HEK293 (cell line): ENCODE measurements at regions of chr17 and their contacts with region 1.

Region 1: GRCh38 chr17:77088455-77089123 is 52.2 kb upstream of the SEC14L1 start:
- H3K4me3 ChIP-seq: peak overlapping the region; percentile 81
- H3K27ac ChIP-seq: peak overlapping the region; percentile 81
- H3K4me1 ChIP-seq: peaks cover 2% of the 10 kb centered on the region
- CTCF ChIP-seq: peak; percentile 98

Region 2: DNA sequence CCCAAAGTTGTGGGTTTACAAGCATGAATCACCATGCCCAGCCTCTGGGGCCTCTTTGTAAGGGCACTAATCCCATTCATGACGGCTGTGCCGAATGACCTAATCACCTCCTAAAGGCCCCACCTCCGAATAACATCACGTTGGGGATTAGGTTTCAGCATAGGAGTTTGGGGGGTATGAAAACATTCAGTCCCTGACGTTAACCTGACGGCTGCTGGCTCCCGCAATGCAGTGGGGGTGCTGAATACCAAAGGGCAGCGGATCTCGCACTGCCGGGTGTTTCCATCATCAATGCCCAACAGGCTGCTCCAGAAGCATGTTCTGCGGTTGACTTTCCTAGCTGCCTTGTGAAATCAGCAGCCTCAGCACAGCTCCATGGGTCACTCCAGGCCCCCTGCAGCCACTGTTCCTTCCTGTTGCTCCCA is 68.6 kb before region 1 on chr17:
- CTCF ChIA-PET with region 1: no interaction called
- POLR2A ChIA-PET with region 1: no interaction called
- H3K4me3 ChIP-seq: no peak overlapping the region
- H3K27ac ChIP-seq: no peak overlapping the region
- H3K4me1 ChIP-seq: no peaks in the 10 kb centered on the region
- CTCF ChIP-seq: no peak

Region 3: GRCh38 chr17:77036807-77037381 is 51.7 kb before region 1 on chr17:
- CTCF ChIA-PET with region 1: no interaction called
- POLR2A ChIA-PET with region 1: no interaction called
- H3K4me3 ChIP-seq: no peak overlapping the region
- H3K27ac ChIP-seq: no peak overlapping the region
- H3K4me1 ChIP-seq: no peaks in the 10 kb centered on the region
- CTCF ChIP-seq: no peak

Region 4: DNA sequence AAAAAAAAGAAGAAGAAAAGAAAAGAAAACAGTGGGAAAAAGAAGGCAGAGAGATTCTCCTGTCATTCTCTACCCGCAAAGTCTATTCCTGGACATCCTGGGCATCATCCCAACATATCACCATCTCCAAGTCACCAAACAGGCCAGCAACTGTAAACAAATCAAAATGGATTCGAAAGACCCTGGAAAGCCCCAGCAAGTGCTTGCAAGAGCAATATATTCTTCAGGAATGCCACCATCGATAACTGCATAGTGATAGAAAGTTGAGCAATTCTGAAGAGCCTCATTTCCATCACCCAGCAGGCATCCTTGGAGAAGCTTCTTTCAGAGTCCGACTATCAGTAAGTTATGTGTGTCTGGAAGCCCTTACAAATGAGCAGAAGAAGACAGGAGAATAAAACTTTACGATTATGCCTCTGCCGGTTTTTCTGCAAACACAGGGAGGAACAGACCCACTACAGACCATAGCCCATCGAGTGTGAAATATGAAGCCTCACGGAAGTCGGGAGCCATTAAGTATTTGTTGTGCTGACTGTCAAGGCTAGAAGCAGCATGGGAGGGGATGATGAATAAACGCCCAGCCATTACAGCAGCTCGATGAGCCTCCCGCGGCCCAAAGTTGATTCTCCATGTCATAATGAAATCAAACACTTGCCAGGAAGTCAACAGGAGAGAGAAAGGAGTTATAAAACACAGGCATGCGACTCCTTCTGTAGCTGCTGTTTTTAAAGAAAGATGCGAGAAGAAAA is 12.3 kb before region 1 on chr17:
- CTCF ChIA-PET with region 1: interaction called, 18 read pairs
- POLR2A ChIA-PET with region 1: interaction called, 10 read pairs
- H3K4me3 ChIP-seq: no peak overlapping the region
- H3K27ac ChIP-seq: no peak overlapping the region; the same call in 1 of the 2 replicates
- H3K4me1 ChIP-seq: peaks cover 4% of the 10 kb centered on the region; the same call in 1 of the 2 replicates
- CTCF ChIP-seq: no peak

Region 5: GRCh38 chr17:77127735-77128361 is 39.3 kb after region 1 on chr17:
- CTCF ChIA-PET with region 1: interaction called, 11 read pairs
- POLR2A ChIA-PET with region 1: interaction called, 13 read pairs
- H3K4me3 ChIP-seq: no peak overlapping the region
- H3K27ac ChIP-seq: no peak overlapping the region
- H3K4me1 ChIP-seq: no peaks in the 10 kb centered on the region; the same call in 1 of the 2 replicates
- CTCF ChIP-seq: no peak

Region 6: GRCh38 chr17:77182205-77183172 is 93.9 kb after region 1 on chr17:
- CTCF ChIA-PET with region 1: interaction called, 11 read pairs
- POLR2A ChIA-PET with region 1: no interaction called
- H3K4me3 ChIP-seq: no peak overlapping the region
- H3K27ac ChIP-seq: no peak overlapping the region
- H3K4me1 ChIP-seq: peaks cover 13% of the 10 kb centered on the region
- CTCF ChIP-seq: no peak

Region 7: GRCh38 chr17:77196251-77196650 is 107.7 kb after region 1 on chr17:
- CTCF ChIA-PET with region 1: no interaction called
- POLR2A ChIA-PET with region 1: no interaction called
- H3K4me3 ChIP-seq: no peak overlapping the region
- H3K27ac ChIP-seq: no peak overlapping the region
- H3K4me1 ChIP-seq: no peaks in the 10 kb centered on the region
- CTCF ChIP-seq: no peak

Region 8: GRCh38 chr17:77254951-77255825 is 166.6 kb after region 1 on chr17:
- CTCF ChIA-PET with region 1: interaction called, 7 read pairs
- POLR2A ChIA-PET with region 1: interaction called, 13 read pairs
- H3K4me3 ChIP-seq: no peak overlapping the region
- H3K27ac ChIP-seq: no peak overlapping the region
- H3K4me1 ChIP-seq: peaks cover 3% of the 10 kb centered on the region; the same call in 1 of the 2 replicates
- CTCF ChIP-seq: no peak